Lower leg skin (tissue), 4 donors: ENCODE measurements at regions of chr5 and their contacts with region 1.

Region 1: DNA sequence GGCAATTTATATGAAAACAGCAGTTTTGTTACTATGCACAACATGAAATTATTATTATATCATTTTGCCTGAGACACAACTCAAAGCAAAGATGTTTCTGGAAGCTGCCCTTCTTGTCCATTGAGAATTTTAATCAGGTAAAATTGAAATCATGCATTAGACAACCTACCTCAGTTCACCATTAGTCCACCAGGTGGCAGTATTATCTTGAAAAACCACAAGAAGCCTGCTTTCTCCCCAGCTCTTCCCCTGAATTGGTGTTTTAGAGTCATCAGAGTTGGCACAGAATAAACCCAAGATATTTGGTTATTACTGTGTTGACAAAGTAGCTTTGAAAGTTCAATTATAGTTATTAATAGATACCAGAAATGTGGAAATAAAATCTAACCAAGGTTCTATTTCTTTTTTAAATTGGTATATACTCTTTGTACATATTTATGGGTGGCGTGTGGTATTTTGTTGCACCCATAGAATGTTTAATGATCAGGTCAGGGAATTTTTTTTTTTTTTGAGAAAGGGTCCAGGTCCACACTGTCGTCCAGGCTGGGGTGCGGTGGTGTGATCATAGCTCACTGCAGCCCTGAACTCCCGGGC is 25.7 kb downstream of the UTP15 start:
- DNase-seq: peak in 1 of 2 donors; percentile 68
- H3K4me3 ChIP-seq: no peak overlapping the region
- CTCF ChIP-seq: peak in 1 of 3 donors; percentile 33
- POLR2A ChIP-seq: no peak

Region 2: DNA sequence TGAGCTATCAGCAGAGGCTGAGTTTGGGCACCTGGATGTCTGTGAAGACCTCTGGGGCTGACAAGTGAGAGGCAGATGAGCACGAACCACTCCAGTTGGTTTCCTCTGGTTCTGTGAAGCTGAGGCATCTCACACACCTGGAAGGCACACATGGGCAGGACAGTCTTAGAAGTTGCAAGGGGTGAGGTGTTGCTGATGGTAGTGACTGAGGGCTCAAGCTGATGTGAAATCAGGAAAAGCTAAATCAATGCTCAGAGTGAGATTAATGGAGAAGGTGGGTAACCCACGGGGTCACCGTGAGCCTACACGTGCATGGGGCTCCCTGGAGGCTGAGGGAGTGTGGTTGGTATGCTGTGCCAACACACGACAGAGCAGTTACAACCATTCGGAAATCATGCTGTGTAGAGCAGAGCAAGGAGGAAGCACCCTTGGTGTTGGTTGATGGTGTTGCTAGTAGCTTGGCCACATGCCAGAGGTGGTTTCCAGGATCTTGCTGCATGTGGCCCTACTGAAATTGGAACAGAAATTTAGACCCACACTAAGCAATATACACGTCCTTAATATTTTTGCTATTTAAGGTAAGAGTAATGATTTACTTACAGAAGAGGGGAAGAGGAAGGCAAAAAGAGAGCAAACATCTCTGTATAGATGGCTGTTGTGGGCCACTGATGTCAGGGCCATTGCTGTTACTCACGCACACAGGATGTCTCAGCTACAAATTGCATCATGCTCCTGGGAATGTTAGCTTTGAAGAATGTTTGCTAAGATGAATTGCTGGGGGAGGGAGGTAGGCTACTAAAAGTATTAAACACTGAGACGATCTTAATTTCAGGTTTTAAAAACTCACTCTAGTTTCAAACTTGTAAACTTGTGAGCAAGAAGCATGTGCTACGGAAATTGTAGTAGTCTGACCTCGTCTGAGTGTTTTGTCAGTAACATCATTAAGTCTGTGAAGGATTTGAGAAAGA is 205.2 kb after region 1 on chr5:
- intact Hi-C with region 1: loop called (anchors 5 kb)
- DNase-seq: peak in 1 of 2 donors; percentile 35
- H3K4me3 ChIP-seq: no peak overlapping the region
- CTCF ChIP-seq: no peak
- POLR2A ChIP-seq: no peak

Region 3: DNA sequence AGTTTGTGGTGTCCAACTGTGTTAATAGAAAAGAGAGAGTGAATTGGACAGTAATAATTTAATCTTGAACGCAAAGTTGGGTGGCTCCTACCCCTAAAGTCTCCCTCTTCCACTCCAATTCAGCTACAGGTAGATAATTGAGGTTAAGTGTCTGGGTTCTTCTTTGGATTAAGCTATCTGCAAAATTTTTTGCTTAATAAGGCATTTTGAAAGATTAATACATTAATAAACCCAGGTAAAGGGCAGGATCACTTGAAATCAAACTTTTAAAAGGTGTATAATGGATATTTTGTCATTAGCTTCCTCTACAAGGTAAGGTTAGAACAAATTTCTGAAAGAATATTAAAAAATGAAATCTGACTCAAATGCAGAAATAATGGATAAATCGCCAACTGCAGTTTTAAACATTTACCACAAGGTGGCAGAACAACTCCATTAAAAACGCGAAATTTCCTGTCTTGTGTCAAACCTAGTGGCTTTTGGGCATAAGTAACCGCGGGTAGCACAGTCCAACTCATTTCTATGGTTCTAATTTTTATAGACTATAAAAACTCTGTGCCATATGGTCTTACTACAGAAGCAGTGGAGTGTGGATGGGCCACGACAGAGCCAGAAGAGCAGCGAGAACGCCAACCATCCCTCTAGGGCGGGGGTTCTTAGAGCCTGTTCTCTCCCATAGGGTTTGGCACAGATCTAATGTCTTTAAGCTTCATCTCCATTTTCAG is 311.3 kb after region 1 on chr5:
- intact Hi-C with region 1: loop called (anchors 10 kb)
- DNase-seq: no peak
- H3K4me3 ChIP-seq: no peak overlapping the region
- CTCF ChIP-seq: peak in 2 of 3 donors; percentile 26 to 74
- POLR2A ChIP-seq: no peak